CD8-positive, alpha-beta T cell (primary cell): ENCODE measurements at regions of chr10 and their contacts with region 1.

Region 1: GRCh38 chr10:30722956-30723620 is 93.5 kb upstream of the LYZL2 start:
- DNase-seq: no peak
- ATAC-seq: no peak
- H3K4me3 ChIP-seq: no peak overlapping the region
- H3K4me3 Mint-ChIP-seq: no peak overlapping the region
- H3K27ac ChIP-seq: no peak overlapping the region
- H3K27ac Mint-ChIP-seq: no peak overlapping the region
- H3K4me1 ChIP-seq: peaks cover 3% of the 10 kb centered on the region
- H3K4me1 Mint-ChIP-seq: no peaks in the 10 kb centered on the region
- H3K27me3 ChIP-seq: no peaks in the 10 kb centered on the region
- H3K27me3 Mint-ChIP-seq: no peaks in the 10 kb centered on the region
- CTCF ChIP-seq: no peak

Region 2: DNA sequence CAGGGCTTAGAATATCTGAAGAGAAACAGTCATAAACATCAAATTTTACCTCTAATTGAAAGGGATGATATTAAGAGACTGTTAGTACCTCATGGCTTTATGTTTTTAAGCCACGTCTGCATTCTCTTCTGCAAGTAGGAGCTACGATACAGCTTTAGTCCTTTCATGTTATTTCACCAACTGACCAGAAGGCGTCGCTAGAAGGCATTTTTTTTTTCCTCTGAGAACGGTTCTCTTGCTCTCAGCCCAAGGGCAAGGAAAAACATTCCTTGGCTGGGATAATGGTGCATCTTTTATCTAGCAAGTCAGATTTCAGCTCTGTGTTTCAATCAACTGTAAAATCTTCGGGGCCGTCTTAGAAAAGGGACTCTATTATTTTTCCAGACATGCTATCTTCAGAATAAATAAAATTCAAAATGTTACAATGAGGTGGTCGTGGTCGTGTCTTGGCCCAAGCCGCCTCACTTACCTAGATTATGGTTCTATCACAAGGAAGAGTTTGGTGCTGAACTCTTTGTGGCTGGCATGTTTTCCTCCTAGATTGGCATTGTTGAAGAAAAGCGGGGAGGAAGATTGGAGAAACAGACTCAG is 52.0 kb before region 1 on chr10:
- CTCF ChIA-PET with region 1: interaction called, 4 read pairs
- POLR2A ChIA-PET with region 1: no interaction called
- intact Hi-C with region 1: loop called (anchors 1 kb)
- DNase-seq: peak in 4 of 9 experiments; percentile 16 to 78 (median 48)
- ATAC-seq: peak; percentile 77
- H3K4me3 ChIP-seq: peak overlapping the region in 1 of 2 experiments; percentile 1
- H3K4me3 Mint-ChIP-seq: peak overlapping the region; percentile 63
- H3K27ac ChIP-seq: no peak overlapping the region
- H3K27ac Mint-ChIP-seq: no peak overlapping the region
- H3K4me1 ChIP-seq: no peaks in the 10 kb centered on the region
- H3K4me1 Mint-ChIP-seq: peaks cover 3% of the 10 kb centered on the region
- H3K27me3 ChIP-seq: peaks cover 0 to 3% of the 10 kb centered on the region in 2 experiments
- H3K27me3 Mint-ChIP-seq: peaks cover 2% of the 10 kb centered on the region
- CTCF ChIP-seq: peak; percentile 91

Region 3: DNA sequence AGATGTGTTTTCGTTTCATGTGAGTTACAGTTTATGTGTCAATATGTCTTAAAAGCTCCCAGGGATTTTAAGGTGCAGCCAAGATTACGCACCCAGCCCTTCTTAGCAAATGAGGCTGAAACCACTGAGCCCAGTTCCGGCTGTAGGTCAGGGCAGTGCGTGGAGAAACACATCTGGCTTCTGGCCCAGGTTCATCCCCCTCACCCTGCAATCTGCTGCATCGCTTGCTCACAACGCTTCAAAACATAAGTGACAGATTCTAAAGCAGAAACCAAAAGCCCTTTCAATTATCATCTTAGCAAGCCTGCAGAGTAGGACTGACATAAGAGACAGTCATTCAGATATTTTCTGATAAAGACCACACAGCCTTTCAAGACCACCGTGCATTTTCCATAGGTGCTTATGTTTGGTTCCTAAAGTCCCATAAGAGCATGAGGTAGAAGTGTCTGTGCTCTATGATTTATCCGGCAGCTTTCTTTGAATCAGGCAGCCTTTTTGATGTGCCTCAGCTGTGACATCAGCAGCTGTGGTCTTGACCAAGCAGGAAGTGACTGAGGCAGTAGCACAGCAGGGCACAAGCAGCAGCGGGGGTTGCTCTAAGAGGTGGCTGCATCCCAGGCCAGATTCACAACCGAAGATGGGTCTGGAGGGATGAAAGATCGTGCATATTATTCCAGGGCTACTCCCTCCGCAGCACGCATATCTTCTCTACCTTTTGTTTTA is 21.5 kb before region 1 on chr10:
- CTCF ChIA-PET with region 1: interaction called, 11 read pairs
- POLR2A ChIA-PET with region 1: interaction called, 3 read pairs
- intact Hi-C with region 1: loop called in 1 of 2 experiments (anchors 2 kb)
- DNase-seq: peak; percentile 41 to 92 (median 74)
- ATAC-seq: peak; percentile 70
- H3K4me3 ChIP-seq: peak overlapping the region; percentile 1 to 43
- H3K4me3 Mint-ChIP-seq: peak overlapping the region; percentile 78
- H3K27ac ChIP-seq: peak overlapping the region; percentile 48 to 81
- H3K27ac Mint-ChIP-seq: peak overlapping the region; percentile 95
- H3K4me1 ChIP-seq: peaks cover 74% of the 10 kb centered on the region
- H3K4me1 Mint-ChIP-seq: peaks cover 83% of the 10 kb centered on the region
- H3K27me3 ChIP-seq: no peaks in the 10 kb centered on the region
- H3K27me3 Mint-ChIP-seq: no peaks in the 10 kb centered on the region
- CTCF ChIP-seq: no peak

Region 4: GRCh38 chr10:30763918-30764317 is 40.8 kb after region 1 on chr10:
- CTCF ChIA-PET with region 1: no interaction called
- POLR2A ChIA-PET with region 1: no interaction called
- intact Hi-C with region 1: no loop called
- DNase-seq: no peak
- ATAC-seq: no peak
- H3K4me3 ChIP-seq: no peak overlapping the region
- H3K4me3 Mint-ChIP-seq: no peak overlapping the region
- H3K27ac ChIP-seq: no peak overlapping the region
- H3K27ac Mint-ChIP-seq: no peak overlapping the region
- H3K4me1 ChIP-seq: no peaks in the 10 kb centered on the region
- H3K4me1 Mint-ChIP-seq: no peaks in the 10 kb centered on the region
- H3K27me3 ChIP-seq: no peaks in the 10 kb centered on the region
- H3K27me3 Mint-ChIP-seq: no peaks in the 10 kb centered on the region
- CTCF ChIP-seq: no peak

Region 5: GRCh38 chr10:31770307-31770902 is 1047.3 kb after region 1 on chr10:
- CTCF ChIA-PET with region 1: interaction called, 12 read pairs
- POLR2A ChIA-PET with region 1: no interaction called
- intact Hi-C with region 1: loop called (anchors 1 kb)
- DNase-seq: peak; percentile 43 to 74 (median 62)
- ATAC-seq: peak; percentile 97
- H3K4me3 ChIP-seq: no peak overlapping the region
- H3K4me3 Mint-ChIP-seq: no peak overlapping the region
- H3K27ac ChIP-seq: no peak overlapping the region
- H3K27ac Mint-ChIP-seq: no peak overlapping the region
- H3K4me1 ChIP-seq: no peaks in the 10 kb centered on the region
- H3K4me1 Mint-ChIP-seq: no peaks in the 10 kb centered on the region
- H3K27me3 ChIP-seq: no peaks in the 10 kb centered on the region
- H3K27me3 Mint-ChIP-seq: no peaks in the 10 kb centered on the region
- CTCF ChIP-seq: peak; percentile 89

Region 6: GRCh38 chr10:32005050-32005449 is 1282.0 kb after region 1 on chr10:
- CTCF ChIA-PET with region 1: no interaction called
- POLR2A ChIA-PET with region 1: no interaction called
- intact Hi-C with region 1: loop called in 1 of 2 experiments (anchors 5 kb)
- DNase-seq: peak in 5 of 9 experiments; percentile 16 to 69 (median 39)
- ATAC-seq: peak; percentile 80
- H3K4me3 ChIP-seq: no peak overlapping the region
- H3K4me3 Mint-ChIP-seq: no peak overlapping the region
- H3K27ac ChIP-seq: no peak overlapping the region
- H3K27ac Mint-ChIP-seq: peak overlapping the region; percentile 47
- H3K4me1 ChIP-seq: no peaks in the 10 kb centered on the region
- H3K4me1 Mint-ChIP-seq: peaks cover 4% of the 10 kb centered on the region
- H3K27me3 ChIP-seq: no peaks in the 10 kb centered on the region
- H3K27me3 Mint-ChIP-seq: no peaks in the 10 kb centered on the region
- CTCF ChIP-seq: peak; percentile 55